ENCODE measurements at regions of chr15 and their contacts with region 1.

Region 1: GRCh38 chr15:54577476-54578250 is 599.4 kb downstream of the UNC13C start:
- DNase-seq: no peak
- H3K4me3 ChIP-seq: no peak overlapping the region
- H3K27ac ChIP-seq: no peak overlapping the region
- H3K4me1 ChIP-seq: no peaks in the 10 kb centered on the region
- H3K27me3 ChIP-seq: no peaks in the 10 kb centered on the region
- CTCF ChIP-seq: no peak

Region 2: GRCh38 chr15:54547491-54547890 is 30.2 kb before region 1 on chr15:
- CTCF ChIA-PET with region 1: no interaction called
- POLR2A ChIA-PET with region 1: no interaction called
- intact Hi-C with region 1: no loop called
- DNase-seq: no peak
- H3K4me3 ChIP-seq: no peak overlapping the region
- H3K27ac ChIP-seq: no peak overlapping the region
- H3K4me1 ChIP-seq: no peaks in the 10 kb centered on the region
- H3K27me3 ChIP-seq: no peaks in the 10 kb centered on the region
- CTCF ChIP-seq: no peak

Region 3: GRCh38 chr15:54638666-54639065 is 61.0 kb after region 1 on chr15:
- CTCF ChIA-PET with region 1: no interaction called
- POLR2A ChIA-PET with region 1: no interaction called
- intact Hi-C with region 1: loop called (anchors 10 kb)
- DNase-seq: no peak
- H3K4me3 ChIP-seq: no peak overlapping the region
- H3K27ac ChIP-seq: no peak overlapping the region
- H3K4me1 ChIP-seq: no peaks in the 10 kb centered on the region
- H3K27me3 ChIP-seq: no peaks in the 10 kb centered on the region
- CTCF ChIP-seq: no peak

Measured in A673 (cell line).